ENCODE measurements at regions of chr1 and their contacts with region 1.

Region 1: GRCh38 chr1:181083842-181084605 is 4.5 kb upstream of the IER5 start:
- H3K4me3 Mint-ChIP-seq: no peak overlapping the region
- H3K27ac Mint-ChIP-seq: peak overlapping the region; percentile 63
- H3K4me1 Mint-ChIP-seq: peaks cover 56% of the 10 kb centered on the region
- H3K27me3 Mint-ChIP-seq: no peaks in the 10 kb centered on the region

Region 2: GRCh38 chr1:181038399-181038873 is 45.6 kb before region 1 on chr1:
- intact Hi-C with region 1: loop called (anchors 2 kb)
- H3K4me3 Mint-ChIP-seq: no peak overlapping the region
- H3K27ac Mint-ChIP-seq: peak overlapping the region; percentile 35
- H3K4me1 Mint-ChIP-seq: peaks cover 78% of the 10 kb centered on the region
- H3K27me3 Mint-ChIP-seq: no peaks in the 10 kb centered on the region

Region 3: GRCh38 chr1:181062836-181063428 is 21.1 kb before region 1 on chr1:
- intact Hi-C with region 1: loop called (anchors 1 kb)
- H3K4me3 Mint-ChIP-seq: peak overlapping the region; percentile 80
- H3K27ac Mint-ChIP-seq: peak overlapping the region; percentile 93
- H3K4me1 Mint-ChIP-seq: peaks cover 55% of the 10 kb centered on the region
- H3K27me3 Mint-ChIP-seq: no peaks in the 10 kb centered on the region

Region 4: DNA sequence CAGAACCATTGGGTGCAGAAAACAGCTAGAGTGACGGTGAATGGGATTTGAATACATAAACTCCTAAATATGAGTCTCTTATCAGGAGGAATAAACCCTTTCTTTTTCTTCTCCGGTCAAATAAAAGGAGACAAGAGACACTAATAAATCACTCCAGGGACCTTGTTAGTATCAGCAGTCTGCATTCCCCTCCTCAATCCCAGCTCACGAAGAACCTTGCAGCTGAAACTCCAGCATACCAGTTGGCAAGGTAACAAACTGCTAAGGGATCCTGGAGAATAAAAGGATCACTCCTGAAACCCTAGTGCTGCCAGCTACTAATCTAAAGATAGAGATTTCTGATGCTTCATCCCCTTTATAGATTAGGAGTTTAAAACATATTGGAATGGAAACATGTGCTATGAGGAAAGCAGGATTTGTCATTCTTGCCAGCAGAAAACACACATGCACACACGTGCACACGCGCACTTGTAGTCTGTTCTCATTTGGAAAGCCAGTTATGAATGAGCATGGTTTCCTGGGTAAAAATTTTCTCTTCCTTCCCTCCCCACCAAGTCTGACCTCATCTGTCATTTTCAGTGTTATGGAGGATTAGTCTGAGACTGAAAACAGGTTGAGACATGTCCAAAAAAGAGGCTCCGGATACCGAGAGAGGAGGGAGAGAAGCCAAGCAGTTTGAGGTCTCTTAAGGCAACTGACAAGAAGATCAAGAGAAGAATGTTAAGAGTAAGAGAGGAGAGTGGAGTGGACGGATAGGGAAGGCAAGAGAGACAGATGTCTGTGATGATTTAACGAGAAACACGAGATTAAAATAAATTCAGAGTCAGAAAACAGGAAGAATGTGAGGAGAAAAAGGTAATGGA is 15.4 kb after region 1 on chr1:
- intact Hi-C with region 1: no loop called
- H3K4me3 Mint-ChIP-seq: no peak overlapping the region
- H3K27ac Mint-ChIP-seq: peak overlapping the region; percentile 46
- H3K4me1 Mint-ChIP-seq: peaks cover 97% of the 10 kb centered on the region
- H3K27me3 Mint-ChIP-seq: peaks cover 5% of the 10 kb centered on the region